Activated CD4-positive, alpha-beta T cell treated with anti-CD3 and anti-CD28 coated beads for 36 hours (primary cell): ENCODE measurements at regions of chr9 and their contacts with region 1.

Region 1: DNA sequence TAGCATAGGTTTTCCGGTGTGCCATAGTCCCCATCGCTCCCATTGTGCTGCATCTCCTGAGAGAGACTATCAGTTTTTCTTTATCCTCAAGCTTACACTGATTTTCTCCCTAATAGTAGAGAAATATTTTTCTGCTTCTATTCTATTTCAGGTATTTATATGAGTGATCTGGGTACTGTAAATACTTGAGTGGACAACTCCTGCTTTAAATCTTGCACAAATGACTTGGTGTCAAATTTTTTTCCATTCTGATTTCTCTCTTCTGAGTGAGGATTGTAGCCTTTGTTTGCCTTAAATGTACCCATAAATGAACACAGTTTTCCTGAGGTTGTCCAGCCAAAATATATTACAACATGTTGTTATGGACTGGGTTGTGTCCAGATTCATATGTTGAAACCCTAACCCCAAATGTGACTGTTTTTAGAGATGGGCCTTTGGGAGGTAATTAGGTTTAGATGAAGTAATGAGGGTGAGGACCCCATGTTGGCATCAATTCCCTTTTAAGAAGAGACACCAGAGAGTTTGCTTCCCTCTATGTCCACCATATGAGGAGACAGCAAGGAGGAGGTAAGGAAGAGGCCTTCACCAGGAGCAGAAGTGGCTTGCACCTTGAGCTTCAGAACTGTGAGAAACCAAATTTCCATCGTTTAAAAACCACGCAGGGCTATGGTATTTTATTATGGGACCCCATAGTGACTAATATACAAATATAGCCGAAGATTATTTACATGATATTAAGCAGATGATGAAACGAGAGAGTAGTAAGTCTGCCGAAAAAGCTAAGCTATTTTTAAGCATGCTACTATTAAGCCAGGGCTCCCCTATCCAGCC is 336.4 kb upstream of the MPDZ start:
- DNase-seq: no peak
- ATAC-seq: no peak
- H3K4me3 Mint-ChIP-seq: no peak overlapping the region
- H3K27ac Mint-ChIP-seq: no peak overlapping the region
- H3K4me1 Mint-ChIP-seq: no peaks in the 10 kb centered on the region
- H3K27me3 Mint-ChIP-seq: no peaks in the 10 kb centered on the region

Region 2: DNA sequence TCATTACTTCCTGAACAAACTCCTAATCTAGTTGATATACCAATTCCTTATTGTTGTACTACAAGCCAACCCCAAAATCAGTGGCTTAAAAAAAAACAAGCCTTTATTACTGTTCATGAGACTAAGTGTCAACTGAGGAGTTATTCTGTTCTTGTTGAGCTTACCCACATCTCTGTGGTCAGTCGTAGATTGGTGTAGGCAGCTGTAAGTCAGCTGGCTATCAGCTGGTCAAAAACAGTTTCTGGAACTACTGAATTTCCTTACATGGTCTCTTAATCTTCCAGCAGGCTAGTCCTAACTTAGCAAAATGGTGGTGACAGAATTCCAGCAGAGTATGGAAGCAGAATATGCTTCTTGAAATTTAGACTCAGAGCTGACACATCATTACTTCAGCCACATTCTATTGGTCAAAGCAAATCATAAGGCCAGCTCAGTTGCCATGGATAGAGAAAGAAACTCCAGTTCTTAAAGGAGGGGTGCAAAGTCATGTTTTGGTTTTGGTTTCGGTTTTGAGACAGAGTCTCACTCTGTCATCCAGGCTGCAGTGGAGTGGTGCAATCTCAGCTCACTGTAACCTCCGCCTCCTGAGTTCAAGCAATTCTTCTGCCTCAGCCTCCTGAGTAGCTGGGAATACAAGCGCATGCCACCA is 49.7 kb after region 1 on chr9:
- CTCF ChIA-PET with region 1: no interaction called
- POLR2A ChIA-PET with region 1: no interaction called
- intact Hi-C with region 1: loop called (anchors 5 to 10 kb)
- DNase-seq: no peak
- ATAC-seq: no peak
- H3K4me3 Mint-ChIP-seq: no peak overlapping the region
- H3K27ac Mint-ChIP-seq: no peak overlapping the region
- H3K4me1 Mint-ChIP-seq: no peaks in the 10 kb centered on the region
- H3K27me3 Mint-ChIP-seq: no peaks in the 10 kb centered on the region

Region 3: DNA sequence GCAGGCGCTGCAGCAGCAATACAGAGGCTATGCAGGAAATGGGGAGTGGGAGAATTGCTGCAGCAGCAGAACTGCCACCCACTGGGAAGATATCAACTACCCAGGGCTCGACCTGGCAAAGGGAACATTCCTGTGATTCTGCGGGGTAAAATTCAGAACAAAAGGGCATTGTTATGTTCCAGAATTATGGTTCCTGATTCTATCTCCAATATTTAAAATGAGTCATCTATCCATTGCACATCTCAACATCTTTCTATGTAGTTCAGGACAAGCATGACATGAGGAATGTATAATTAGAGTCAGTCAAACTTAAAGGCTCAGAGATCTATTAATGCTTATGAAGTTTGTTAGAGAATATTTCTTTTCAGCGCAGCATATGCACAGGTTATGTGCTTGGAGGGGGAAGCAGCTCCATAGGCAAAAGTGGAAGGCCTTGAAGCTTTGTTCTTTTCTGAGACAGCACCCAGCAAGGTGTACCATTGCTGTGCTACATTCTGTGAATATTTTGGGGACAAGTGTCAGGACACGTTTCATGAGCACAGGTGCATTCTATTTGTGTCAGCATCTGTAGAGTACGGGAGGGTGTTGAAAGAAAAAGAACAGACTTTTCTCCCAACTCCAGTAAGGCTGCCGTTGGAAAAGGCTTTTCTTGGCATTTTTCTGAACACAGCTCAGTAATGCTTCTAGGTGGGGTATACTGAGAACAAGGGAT is 59.2 kb after region 1 on chr9:
- CTCF ChIA-PET with region 1: no interaction called
- POLR2A ChIA-PET with region 1: no interaction called
- intact Hi-C with region 1: loop called in 1 of 2 experiments (anchors 10 kb)
- DNase-seq: no peak
- ATAC-seq: no peak
- H3K4me3 Mint-ChIP-seq: no peak overlapping the region
- H3K27ac Mint-ChIP-seq: no peak overlapping the region
- H3K4me1 Mint-ChIP-seq: no peaks in the 10 kb centered on the region
- H3K27me3 Mint-ChIP-seq: no peaks in the 10 kb centered on the region